ENCODE measurements at regions of chr15 and their contacts with region 1.

Region 1: DNA sequence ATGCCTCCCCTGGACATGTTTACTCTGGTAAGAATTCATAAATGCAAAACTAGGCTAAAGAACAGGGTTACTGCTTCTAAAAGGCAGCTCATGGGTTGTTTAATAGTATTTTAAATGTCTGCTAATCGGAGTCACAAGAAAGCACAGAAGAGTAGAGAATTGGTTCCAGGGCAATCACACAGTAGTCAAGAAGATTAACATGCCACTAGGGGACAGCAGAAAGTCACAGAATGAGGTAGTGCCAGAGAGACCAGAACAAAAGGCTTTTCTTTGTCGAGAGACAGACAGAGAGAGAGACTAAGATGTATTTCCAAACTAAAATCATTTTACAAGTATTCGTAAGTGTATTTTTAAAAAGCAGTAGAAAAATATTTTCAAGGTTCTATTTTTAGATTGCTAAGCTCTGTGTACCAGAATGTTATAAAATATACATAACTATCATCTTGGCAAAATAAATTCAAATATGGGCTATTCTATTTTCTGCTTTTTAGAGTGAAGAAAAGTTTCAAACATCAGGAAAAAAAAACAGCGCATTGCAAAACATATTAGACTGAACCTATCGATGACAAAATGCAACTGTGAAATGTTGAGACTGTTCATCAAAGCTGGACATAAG is 78.3 kb upstream of the CDIN1 start:
- DNase-seq: peak; percentile 74
- ATAC-seq: peak; percentile 98
- H3K4me3 ChIP-seq: no peak overlapping the region
- H3K27ac ChIP-seq: no peak overlapping the region
- H3K4me1 ChIP-seq: peaks cover 20% of the 10 kb centered on the region
- H3K27me3 ChIP-seq: peaks cover 0 to 41% of the 10 kb centered on the region in 2 experiments; a peak in 3 of 5 replicates
- CTCF ChIP-seq: peak; percentile 85
- EP300 ChIP-seq: no peak
- POLR2A ChIP-seq: no peak
- RAD21 ChIP-seq: peak; percentile 67; the same call in 1 of the 2 replicates

Region 2: DNA sequence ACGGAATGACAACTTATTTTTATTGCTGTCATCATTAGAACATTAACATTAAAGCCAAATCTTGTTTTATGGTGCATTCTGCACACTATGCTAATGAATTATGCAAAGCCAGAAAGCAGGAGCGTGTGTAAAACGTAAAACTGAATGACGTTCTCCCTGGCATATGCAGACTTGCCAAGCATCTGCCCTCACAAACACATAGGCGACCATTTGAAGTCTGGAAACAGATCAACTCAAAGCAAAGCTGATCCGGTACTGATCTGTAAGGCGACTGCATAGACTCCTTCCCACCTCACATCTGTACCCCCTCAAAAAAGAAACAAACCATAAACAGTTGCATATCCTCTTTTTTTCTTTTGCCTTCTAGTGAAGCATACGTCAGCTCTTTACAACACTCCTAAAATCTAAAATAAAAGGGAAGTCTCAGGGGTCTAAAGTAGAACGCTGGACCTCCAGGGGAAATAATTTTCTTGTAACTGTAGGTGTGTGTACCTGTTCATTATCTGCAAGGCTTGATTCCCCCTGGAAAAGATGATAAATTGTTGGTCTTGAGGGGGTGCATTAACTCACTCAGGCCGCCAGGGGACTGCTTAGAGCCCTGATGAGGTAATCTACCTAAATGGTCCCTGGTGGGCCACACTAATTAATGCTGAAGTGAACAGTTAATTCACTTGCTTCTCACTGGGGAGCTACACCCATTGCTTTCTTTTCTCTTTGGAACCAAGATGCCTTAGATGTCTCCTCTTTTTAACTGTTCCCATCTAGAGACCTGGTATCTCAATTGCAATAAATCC is 309.7 kb after region 1 on chr15:
- CTCF ChIA-PET with region 1: no interaction called
- POLR2A ChIA-PET with region 1: no interaction called
- in situ Hi-C with region 1: no loop called
- intact Hi-C with region 1: loop called (anchors 10 kb)
- DNase-seq: no peak
- ATAC-seq: 0 out of 3 replicates have a peak, but pooled peaks have one; percentile 31
- H3K4me3 ChIP-seq: no peak overlapping the region
- H3K27ac ChIP-seq: no peak overlapping the region
- H3K4me1 ChIP-seq: peaks cover 15% of the 10 kb centered on the region
- H3K27me3 ChIP-seq: no peaks in the 10 kb centered on the region
- CTCF ChIP-seq: no peak
- EP300 ChIP-seq: no peak
- POLR2A ChIP-seq: no peak
- RAD21 ChIP-seq: no peak

Region 3: DNA sequence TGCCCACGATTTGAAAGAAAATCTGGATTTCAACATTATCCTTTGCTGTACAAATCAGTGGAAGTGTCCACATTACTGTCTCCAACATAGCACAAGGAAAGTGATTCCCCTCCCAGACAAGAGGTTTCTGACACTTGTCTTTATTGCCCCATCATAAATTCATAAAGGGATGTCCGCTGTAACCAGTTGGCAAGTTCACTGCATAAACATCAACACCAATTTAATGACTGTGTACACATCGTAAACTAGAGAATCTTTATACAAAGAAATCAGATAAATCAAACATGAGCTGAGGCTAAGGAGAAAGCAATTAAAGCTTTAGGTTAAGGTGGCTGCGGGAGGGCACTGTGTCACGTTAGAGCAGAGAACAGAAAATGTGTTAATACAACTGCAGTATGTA is 469.4 kb after region 1 on chr15:
- CTCF ChIA-PET with region 1: no interaction called
- POLR2A ChIA-PET with region 1: no interaction called
- in situ Hi-C with region 1: no loop called
- intact Hi-C with region 1: loop called (anchors 10 kb)
- DNase-seq: no peak
- ATAC-seq: no peak
- H3K4me3 ChIP-seq: no peak overlapping the region
- H3K27ac ChIP-seq: no peak overlapping the region
- H3K4me1 ChIP-seq: no peaks in the 10 kb centered on the region
- H3K27me3 ChIP-seq: no peaks in the 10 kb centered on the region
- CTCF ChIP-seq: no peak
- EP300 ChIP-seq: no peak
- POLR2A ChIP-seq: no peak
- RAD21 ChIP-seq: no peak

Region 4: DNA sequence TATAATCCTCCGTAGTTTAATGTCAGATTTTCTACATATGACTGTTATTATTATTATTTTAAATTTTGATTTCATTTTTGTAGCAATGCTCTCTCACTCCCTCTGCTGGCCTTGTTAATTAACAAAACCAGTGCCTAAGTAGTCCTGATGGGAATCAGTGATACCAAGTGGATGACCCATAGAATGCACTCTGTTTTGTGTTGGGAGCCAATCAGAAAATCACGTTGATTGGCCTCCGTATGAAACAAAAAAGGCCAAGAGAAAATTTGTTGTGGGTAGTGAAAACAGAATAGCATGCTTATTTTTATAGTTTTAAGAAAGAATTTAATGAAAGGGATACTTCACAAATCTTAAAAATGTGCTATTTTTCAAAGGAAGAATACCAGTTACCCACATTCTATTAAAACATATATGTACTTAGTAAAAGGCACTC is 633.5 kb after region 1 on chr15:
- CTCF ChIA-PET with region 1: interaction called, 3 read pairs
- POLR2A ChIA-PET with region 1: no interaction called
- in situ Hi-C with region 1: no loop called
- intact Hi-C with region 1: loop called (anchors 2 kb)
- DNase-seq: peak; percentile 34
- ATAC-seq: peak; percentile 84
- H3K4me3 ChIP-seq: no peak overlapping the region
- H3K27ac ChIP-seq: no peak overlapping the region
- H3K4me1 ChIP-seq: no peaks in the 10 kb centered on the region
- H3K27me3 ChIP-seq: no peaks in the 10 kb centered on the region
- CTCF ChIP-seq: peak; percentile 49
- EP300 ChIP-seq: no peak
- POLR2A ChIP-seq: no peak
- RAD21 ChIP-seq: no peak

Measured in HepG2 (cell line).